Activated CD8-positive, alpha-beta T cell treated with anti-CD3 and anti-CD28 coated beads for 36 hours (primary cell): ENCODE measurements at regions of chr9 and their contacts with region 1.

Region 1: GRCh38 chr9:114681594-114682332 is at the start of gene TEX48:
- DNase-seq: peak; percentile 92
- ATAC-seq: peak; percentile 90
- H3K4me3 Mint-ChIP-seq: no peak within 1 kb of the TSS
- H3K27ac Mint-ChIP-seq: peak within 1 kb of the TSS; percentile 89
- H3K4me1 Mint-ChIP-seq: peaks cover 69% of the 10 kb centered on the region
- H3K27me3 Mint-ChIP-seq: peaks cover 11% of the 10 kb centered on the region
- CTCF ChIP-seq: peak; percentile 81
- total RNA-seq, gene TEX48: 0.65 TPM in 1 of 2 experiments, not detected in the other

Region 2: GRCh38 chr9:114653556-114654159 is 28.1 kb before region 1 on chr9:
- CTCF ChIA-PET with region 1: interaction called, 19 read pairs
- POLR2A ChIA-PET with region 1: no interaction called
- intact Hi-C with region 1: no loop called
- DNase-seq: peak; percentile 90
- ATAC-seq: peak; percentile 97
- H3K4me3 Mint-ChIP-seq: no peak overlapping the region
- H3K27ac Mint-ChIP-seq: no peak overlapping the region
- H3K4me1 Mint-ChIP-seq: peaks cover 25% of the 10 kb centered on the region
- H3K27me3 Mint-ChIP-seq: no peaks in the 10 kb centered on the region
- CTCF ChIP-seq: peak; percentile 91

Region 3: DNA sequence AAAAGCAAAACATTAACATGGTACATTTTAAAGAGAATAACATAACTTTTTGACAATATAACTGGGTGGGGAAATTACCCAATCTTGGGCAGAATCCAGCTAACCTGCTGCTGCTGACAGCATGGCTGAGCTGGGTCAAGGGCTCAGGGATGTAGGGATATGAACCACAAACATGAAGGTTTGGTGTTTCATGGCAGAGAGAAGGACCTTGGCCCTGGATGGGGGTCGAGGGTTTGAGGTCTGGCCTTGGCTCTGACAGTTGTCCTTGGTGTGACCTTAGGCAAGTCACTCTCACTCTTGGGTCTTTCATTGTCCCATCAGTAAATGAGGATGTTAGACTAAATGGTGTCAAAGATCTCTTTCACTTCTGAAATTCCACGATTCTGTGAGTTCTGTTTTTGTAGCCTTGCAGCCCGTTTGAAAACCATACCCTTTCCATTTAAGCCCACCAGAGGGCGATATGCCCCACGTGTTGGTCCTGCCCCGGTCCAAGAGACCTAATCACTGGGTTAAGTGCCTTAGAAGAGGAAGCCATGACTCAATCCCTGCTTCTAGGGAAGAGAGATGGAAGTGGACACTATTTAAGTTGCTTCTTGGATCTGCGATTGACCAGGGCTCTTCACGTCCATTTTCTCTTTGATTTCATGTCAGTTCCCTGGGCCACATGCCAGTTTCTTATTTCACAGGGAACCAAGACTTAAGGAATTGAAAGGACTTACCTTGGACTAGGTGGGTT is 57.0 kb after region 1 on chr9:
- CTCF ChIA-PET with region 1: interaction called, 126 read pairs
- POLR2A ChIA-PET with region 1: interaction called, 3 read pairs
- intact Hi-C with region 1: loop called (anchors 2 kb)
- DNase-seq: peak; percentile 80
- ATAC-seq: peak; percentile 71
- H3K4me3 Mint-ChIP-seq: no peak overlapping the region
- H3K27ac Mint-ChIP-seq: peak overlapping the region; percentile 94
- H3K4me1 Mint-ChIP-seq: peaks cover 53% of the 10 kb centered on the region
- H3K27me3 Mint-ChIP-seq: no peaks in the 10 kb centered on the region
- CTCF ChIP-seq: peak; percentile 75

Region 4: GRCh38 chr9:114906908-114907571 is 225.3 kb after region 1 on chr9:
- CTCF ChIA-PET with region 1: interaction called, 188 read pairs
- POLR2A ChIA-PET with region 1: interaction called, 4 read pairs
- intact Hi-C with region 1: loop called (anchors 1 kb)
- DNase-seq: peak; percentile 48
- ATAC-seq: peak; percentile 22
- H3K4me3 Mint-ChIP-seq: no peak overlapping the region
- H3K27ac Mint-ChIP-seq: peak overlapping the region; percentile 96
- H3K4me1 Mint-ChIP-seq: peaks cover 47% of the 10 kb centered on the region
- H3K27me3 Mint-ChIP-seq: no peaks in the 10 kb centered on the region
- CTCF ChIP-seq: peak; percentile 63

Region 5: GRCh38 chr9:114930056-114930812 is 248.5 kb after region 1 on chr9 and contains the start of gene TNFSF8:
- CTCF ChIA-PET with region 1: interaction called, 29 read pairs
- POLR2A ChIA-PET with region 1: interaction called, 3 read pairs
- intact Hi-C with region 1: no loop called
- DNase-seq: peak; percentile 91
- ATAC-seq: peak; percentile 87
- H3K4me3 Mint-ChIP-seq: peak within 1 kb of the TSS; percentile 89
- H3K27ac Mint-ChIP-seq: peak within 1 kb of the TSS; percentile 98
- H3K4me1 Mint-ChIP-seq: peaks cover 47% of the 10 kb centered on the region
- H3K27me3 Mint-ChIP-seq: no peaks in the 10 kb centered on the region
- CTCF ChIP-seq: no peak
- total RNA-seq, gene TNFSF8: 21.7 to 23.9 TPM

Region 6: DNA sequence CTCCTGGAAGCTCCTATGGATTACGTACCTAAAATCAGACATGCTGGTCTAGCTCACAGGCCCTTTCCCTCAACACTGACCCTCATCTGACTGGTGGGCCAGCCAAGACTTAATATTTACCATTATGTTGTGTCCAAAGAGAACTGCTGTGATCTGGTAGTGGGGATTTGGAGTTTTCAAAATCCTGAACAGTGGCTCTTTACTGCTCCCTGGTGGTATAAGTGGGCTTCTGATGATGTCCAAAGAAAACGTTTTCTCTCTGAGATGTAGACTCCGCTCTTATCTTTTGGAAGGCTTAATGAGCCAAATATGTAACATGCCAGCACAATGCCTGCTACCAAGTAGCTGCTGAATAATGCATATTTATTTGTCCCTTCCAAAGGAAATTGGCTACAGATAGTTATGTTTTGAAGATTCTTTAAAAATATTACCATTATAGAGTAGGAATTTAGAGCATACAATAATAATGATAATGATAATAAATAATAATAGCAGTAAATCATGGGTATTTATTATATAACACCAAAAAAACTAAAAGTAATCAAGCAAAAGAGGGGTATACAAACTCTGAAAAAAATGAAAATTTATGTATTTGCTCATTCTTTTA is 842.8 kb after region 1 on chr9:
- CTCF ChIA-PET with region 1: interaction called, 6 read pairs
- POLR2A ChIA-PET with region 1: no interaction called
- intact Hi-C with region 1: loop called (anchors 5 kb)
- DNase-seq: peak; percentile 6
- ATAC-seq: peak; percentile 42
- H3K4me3 Mint-ChIP-seq: no peak overlapping the region
- H3K27ac Mint-ChIP-seq: no peak overlapping the region
- H3K4me1 Mint-ChIP-seq: no peaks in the 10 kb centered on the region
- H3K27me3 Mint-ChIP-seq: peaks cover 20% of the 10 kb centered on the region
- CTCF ChIP-seq: peak; percentile 62